H1 (cell line): ENCODE measurements at regions of chr19 and their contacts with region 1.

Region 1: GRCh38 chr19:2186071-2186846 is 22.5 kb downstream of the DOT1L start:
- DNase-seq: no peak
- H3K4me3 ChIP-seq: no peak overlapping the region
- H3K27ac ChIP-seq: no peak overlapping the region; the same call in none of the 2 replicates
- H3K4me1 ChIP-seq: no peaks in the 10 kb centered on the region; a peak in 1 of 7 replicates
- H3K27me3 ChIP-seq: no peaks in the 10 kb centered on the region
- CTCF ChIP-seq: no peak
- EP300 ChIP-seq: no peak
- POLR2A ChIP-seq: no peak
- RAD21 ChIP-seq: no peak

Region 2: GRCh38 chr19:2151339-2152229 is 34.7 kb before region 1 on chr19 and contains the start of gene AP3D1:
- CTCF ChIA-PET with region 1: interaction called, 13 read pairs
- POLR2A ChIA-PET with region 1: no interaction called
- DNase-seq: peak; percentile 99 to 100
- H3K4me3 ChIP-seq: peak within 1 kb of the TSS; percentile 64 to 99 (median 92)
- H3K27ac ChIP-seq: peak within 1 kb of the TSS; percentile 36
- H3K4me1 ChIP-seq: peaks cover 7 to 14% (median 13%) of the 10 kb centered on the region in 4 experiments
- H3K27me3 ChIP-seq: no peaks in the 10 kb centered on the region
- CTCF ChIP-seq: no peak
- EP300 ChIP-seq: no peak
- POLR2A ChIP-seq: peak in 1 of 2 experiments; percentile 29; a peak in 1 of 3 replicates
- RAD21 ChIP-seq: no peak
- total RNA-seq, gene AP3D1: 174 and 184 TPM in 2 replicates

Region 3: DNA sequence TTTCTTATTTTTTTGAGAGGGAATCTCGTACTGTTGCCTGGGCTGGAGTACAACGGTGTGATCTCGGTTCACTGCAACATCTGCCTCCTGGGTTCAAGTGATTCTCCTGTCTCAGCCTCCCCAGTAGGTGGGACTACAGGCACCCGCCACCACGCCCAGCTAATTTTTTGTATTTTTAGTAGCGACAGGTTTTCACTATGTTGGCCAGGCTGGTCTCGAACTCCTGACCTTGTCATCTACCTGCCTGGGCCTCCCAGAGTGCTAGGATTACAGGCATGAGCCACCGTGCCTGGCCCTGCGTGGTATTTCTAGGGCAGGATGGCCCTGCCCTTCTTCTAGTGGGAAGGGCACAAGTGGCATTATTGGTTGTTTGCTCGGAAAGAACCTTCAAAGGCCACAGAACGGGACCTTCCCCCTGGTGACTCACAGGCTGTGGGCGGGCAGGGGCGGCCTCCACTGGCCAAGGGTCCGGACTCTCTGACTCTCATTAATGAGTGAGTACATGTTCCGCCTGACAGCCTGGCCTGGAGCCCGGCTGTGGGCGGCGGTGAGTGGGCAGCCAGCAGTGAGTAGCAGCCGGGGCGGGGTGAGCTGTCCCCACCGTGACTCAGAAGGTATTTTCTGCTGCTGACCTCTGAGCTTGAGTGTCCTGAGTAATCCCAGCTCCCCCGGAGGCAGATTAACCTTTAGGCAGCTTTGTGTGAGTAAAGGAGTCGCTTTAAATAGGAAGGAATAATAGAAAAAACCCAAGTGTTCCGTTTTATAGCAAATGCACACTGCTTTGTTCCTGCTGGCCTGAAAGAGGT is 17.4 kb before region 1 on chr19:
- CTCF ChIA-PET with region 1: interaction called, 32 read pairs
- POLR2A ChIA-PET with region 1: interaction called, 5 read pairs
- DNase-seq: no peak
- H3K4me3 ChIP-seq: no peak overlapping the region
- H3K27ac ChIP-seq: no peak overlapping the region
- H3K4me1 ChIP-seq: peaks cover 3 to 24% (median 9%) of the 10 kb centered on the region in 4 experiments
- H3K27me3 ChIP-seq: no peaks in the 10 kb centered on the region
- CTCF ChIP-seq: no peak
- EP300 ChIP-seq: no peak
- POLR2A ChIP-seq: no peak
- RAD21 ChIP-seq: no peak

Region 4: GRCh38 chr19:2173767-2174577 is 12.3 kb before region 1 on chr19:
- CTCF ChIA-PET with region 1: interaction called, 32 read pairs
- POLR2A ChIA-PET with region 1: interaction called, 5 read pairs
- DNase-seq: no peak
- H3K4me3 ChIP-seq: no peak overlapping the region
- H3K27ac ChIP-seq: no peak overlapping the region; the same call in 1 of the 2 replicates
- H3K4me1 ChIP-seq: peaks cover 3 to 19% (median 9%) of the 10 kb centered on the region in 4 experiments
- H3K27me3 ChIP-seq: no peaks in the 10 kb centered on the region
- CTCF ChIP-seq: no peak
- EP300 ChIP-seq: no peak
- POLR2A ChIP-seq: no peak
- RAD21 ChIP-seq: no peak

Region 5: GRCh38 chr19:2199215-2199614 is 13.0 kb after region 1 on chr19:
- CTCF ChIA-PET with region 1: interaction called, 19 read pairs
- POLR2A ChIA-PET with region 1: interaction called, 4 read pairs
- DNase-seq: peak in 1 of 2 experiments; percentile 79
- H3K4me3 ChIP-seq: no peak overlapping the region
- H3K27ac ChIP-seq: no peak overlapping the region
- H3K4me1 ChIP-seq: no peaks in the 10 kb centered on the region
- H3K27me3 ChIP-seq: no peaks in the 10 kb centered on the region
- CTCF ChIP-seq: peak; percentile 76 to 82 (median 76)
- EP300 ChIP-seq: 0 out of 3 replicates have a peak, but pooled peaks of 1 of the 2 experiments have one; percentile 14
- POLR2A ChIP-seq: no peak
- RAD21 ChIP-seq: peak; percentile 47 to 65